Ascending aorta (tissue), 2 donors: ENCODE measurements at regions of chr14 and their contacts with region 1.

Region 1: DNA sequence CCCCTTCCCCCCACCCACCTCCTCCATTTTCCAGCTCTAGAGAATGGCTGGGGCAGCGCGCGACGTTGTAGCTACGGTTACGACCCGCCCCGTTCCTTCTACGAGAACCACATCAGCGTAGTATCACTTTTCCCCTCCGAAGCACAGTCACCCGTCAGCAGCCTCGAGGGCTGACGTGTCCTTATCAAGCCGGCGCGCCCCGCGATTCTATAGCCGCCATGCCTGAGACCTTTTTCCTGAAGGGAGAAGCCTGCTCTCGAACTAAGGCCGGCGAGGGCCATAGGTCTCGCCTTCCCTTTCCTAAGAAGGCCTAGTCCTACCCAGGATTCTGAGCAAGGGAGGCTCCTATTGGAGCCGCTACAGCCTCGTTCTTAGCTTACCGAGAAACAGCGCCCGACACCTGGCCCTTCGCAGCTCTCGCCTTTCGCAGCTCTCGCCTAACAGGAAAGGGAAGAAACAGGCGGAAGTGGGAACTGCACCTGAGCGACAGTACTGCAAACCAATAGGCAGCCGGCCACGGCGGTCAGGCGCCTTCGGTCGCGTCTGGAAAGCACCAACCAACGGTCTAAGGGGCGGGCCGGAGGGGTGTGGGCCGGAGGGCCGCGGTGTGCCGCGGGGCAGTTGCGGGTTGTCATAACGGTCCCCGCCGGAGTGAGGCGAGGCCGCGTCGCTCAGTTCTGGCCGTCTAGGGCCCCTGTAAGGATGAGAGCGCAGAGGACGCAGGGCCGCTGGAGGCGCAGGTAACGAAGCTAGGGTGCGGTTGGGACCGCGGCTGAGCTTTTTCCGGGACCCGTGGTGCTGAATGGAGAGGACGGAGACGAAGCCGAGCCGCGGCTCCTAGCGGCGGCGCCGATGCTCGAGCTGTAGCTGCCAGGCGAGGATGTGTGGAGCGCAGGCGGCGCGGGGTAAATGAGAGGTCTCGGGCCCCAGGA is at the starts of genes MGAT2 and RPL36AL:
- DNase-seq: peak; percentile 95 to 98
- H3K4me3 ChIP-seq: peak within 1 kb of the TSS; percentile 63 to 98
- H3K27ac ChIP-seq: peak within 1 kb of the TSS; percentile 97 to 98
- H3K4me1 ChIP-seq: peaks cover 6 to 29% of the 10 kb centered on the region in 2 donors
- H3K27me3 ChIP-seq: no peaks in the 10 kb centered on the region
- CTCF ChIP-seq: peak; percentile 20 to 32 (median 30)
- total RNA-seq, gene MGAT2: 37.4 TPM
- total RNA-seq, gene RPL36AL: 21.3 TPM

Region 2: GRCh38 chr14:49585803-49586672 is 34.4 kb before region 1 on chr14 and contains the start of gene RPS29:
- intact Hi-C with region 1: loop called (anchors 2 kb)
- DNase-seq: peak; percentile 92 to 99
- H3K4me3 ChIP-seq: peak within 1 kb of the TSS; percentile 73 to 90
- H3K27ac ChIP-seq: peak within 1 kb of the TSS; percentile 78 to 93
- H3K4me1 ChIP-seq: peaks cover 4 to 16% of the 10 kb centered on the region in 2 donors
- H3K27me3 ChIP-seq: no peaks in the 10 kb centered on the region
- CTCF ChIP-seq: no peak
- total RNA-seq, gene RPS29: 2,262 TPM

Region 3: DNA sequence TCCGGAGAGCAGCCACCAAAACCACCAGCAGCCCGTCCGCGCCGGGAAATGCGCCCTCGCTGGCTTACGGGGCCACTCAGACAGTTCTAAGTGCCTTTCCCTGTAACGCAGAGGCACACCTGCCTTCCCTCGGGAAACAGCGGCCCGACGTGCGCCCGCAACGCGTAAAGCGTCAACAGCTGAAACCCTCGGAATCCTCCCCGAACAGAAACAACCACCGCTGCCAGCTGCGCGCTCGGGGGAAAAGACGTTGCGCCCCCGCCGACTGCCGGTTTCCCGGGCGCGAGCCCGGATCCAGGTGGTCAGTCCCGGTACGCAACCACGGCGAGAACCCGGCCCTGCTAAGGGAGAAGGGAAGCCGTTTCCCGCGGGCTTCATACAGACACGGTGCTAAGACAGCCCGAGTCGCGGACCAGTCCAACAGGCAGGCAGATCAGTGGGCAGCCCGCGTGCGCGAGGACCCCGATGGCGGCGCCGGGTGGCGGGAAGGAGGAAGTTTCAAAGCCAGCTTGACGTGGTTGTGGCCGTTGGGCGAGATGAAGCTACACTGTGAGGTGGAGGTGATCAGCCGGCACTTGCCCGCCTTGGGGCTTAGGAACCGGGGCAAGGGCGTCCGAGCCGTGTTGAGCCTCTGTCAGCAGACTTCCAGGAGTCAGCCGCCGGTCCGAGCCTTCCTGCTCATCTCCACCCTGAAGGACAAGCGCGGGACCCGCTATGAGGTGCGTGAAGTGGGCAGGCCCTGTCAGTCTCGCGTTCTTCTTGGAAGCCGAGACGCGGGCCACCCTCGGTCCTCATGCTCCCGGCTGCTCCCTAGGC is 21.8 kb before region 1 on chr14 and contains the start of gene LRR1:
- intact Hi-C with region 1: loop called (anchors 1 kb)
- DNase-seq: peak; percentile 46 to 91
- H3K4me3 ChIP-seq: peak within 1 kb of the TSS; percentile 82
- H3K27ac ChIP-seq: peak within 1 kb of the TSS; percentile 93 to 96
- H3K4me1 ChIP-seq: peaks cover 0 to 5% of the 10 kb centered on the region in 2 donors
- H3K27me3 ChIP-seq: no peaks in the 10 kb centered on the region
- CTCF ChIP-seq: peak in 1 of 3 experiments; percentile 17
- total RNA-seq, gene LRR1: not detected

Region 4: DNA sequence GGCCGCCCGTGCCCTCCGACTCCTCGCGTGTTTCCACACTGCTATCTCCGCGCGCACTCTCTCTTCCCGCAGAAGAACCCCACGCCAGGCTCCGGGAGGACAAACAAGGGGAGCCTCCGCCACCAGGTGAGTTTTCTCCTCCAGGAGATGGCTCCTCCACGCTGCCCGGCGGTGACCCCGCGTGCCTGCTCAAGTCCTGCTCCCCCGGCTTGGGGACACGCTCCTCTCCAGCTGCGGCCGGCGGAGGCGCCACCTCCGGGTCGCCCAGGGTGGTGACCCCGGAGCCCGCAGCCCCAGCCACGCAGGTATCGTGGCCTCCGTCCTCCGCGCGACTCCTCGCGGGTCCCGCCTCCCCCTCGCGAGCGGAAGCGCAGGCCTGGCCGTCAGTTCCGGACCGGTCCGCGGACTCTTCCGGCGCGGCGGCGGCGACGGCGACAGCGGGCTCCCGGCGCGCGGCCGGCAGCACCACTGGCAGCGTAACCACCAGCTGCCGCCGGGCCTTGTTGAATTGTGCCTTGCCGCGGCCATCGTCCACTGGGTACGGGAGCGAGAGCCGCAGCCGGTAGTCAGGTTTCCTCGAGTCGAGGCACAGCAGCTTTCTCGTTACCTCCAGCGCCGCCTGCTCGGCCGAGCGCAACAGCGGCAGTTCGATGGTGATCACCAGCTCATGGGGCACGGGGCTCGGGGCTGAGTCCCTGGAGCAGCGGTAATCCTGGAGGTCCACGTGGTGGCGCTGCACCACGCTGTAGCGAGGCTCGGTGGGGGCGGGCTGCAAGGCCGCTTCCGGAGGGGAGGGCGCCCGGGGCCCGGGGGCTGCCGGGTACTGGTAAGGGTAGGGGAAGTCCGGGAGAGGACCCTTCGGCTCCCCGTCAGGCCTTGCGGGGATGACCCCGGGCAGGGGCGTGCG is 13.4 kb after region 1 on chr14:
- intact Hi-C with region 1: loop called (anchors 1 kb)
- DNase-seq: peak; percentile 72 to 96
- H3K4me3 ChIP-seq: peak overlapping the region; percentile 54 to 79
- H3K27ac ChIP-seq: peak overlapping the region; percentile 93 to 96
- H3K4me1 ChIP-seq: peaks cover 0 to 7% of the 10 kb centered on the region in 2 donors
- H3K27me3 ChIP-seq: no peaks in the 10 kb centered on the region
- CTCF ChIP-seq: peak; percentile 73 to 95 (median 76)

Region 5: GRCh38 chr14:50116181-50116956 is 495.9 kb after region 1 on chr14 and contains the start of gene VCPKMT:
- intact Hi-C with region 1: loop called (anchors 5 kb)
- DNase-seq: peak; percentile 74 to 97
- H3K4me3 ChIP-seq: peak within 1 kb of the TSS; percentile 84
- H3K27ac ChIP-seq: peak within 1 kb of the TSS; percentile 82 to 85
- H3K4me1 ChIP-seq: peaks cover 0 to 10% of the 10 kb centered on the region in 2 donors
- H3K27me3 ChIP-seq: no peaks in the 10 kb centered on the region
- CTCF ChIP-seq: no peak
- total RNA-seq, gene VCPKMT: not detected

Region 6: DNA sequence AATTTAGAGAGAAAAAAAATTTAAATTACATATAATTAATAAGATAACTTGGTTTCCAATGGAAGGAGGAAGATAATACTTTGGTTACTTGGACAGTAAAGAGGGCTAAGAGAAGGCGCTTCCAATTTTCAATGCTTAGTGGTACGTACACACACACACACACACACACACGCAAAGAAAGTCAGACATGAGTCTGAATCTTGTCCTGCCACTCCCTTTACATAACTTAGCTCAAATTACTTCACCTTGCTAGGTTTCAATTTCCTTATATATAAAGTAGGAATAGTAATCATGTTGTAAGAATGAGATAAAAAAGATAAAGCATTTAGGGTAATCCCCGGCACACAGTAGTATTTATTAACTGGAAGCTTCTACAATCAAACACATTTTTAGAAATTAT is 535.7 kb after region 1 on chr14:
- intact Hi-C with region 1: no loop called
- DNase-seq: no peak
- H3K4me3 ChIP-seq: no peak overlapping the region
- H3K27ac ChIP-seq: no peak overlapping the region
- H3K4me1 ChIP-seq: no peaks in the 10 kb centered on the region
- H3K27me3 ChIP-seq: no peaks in the 10 kb centered on the region
- CTCF ChIP-seq: no peak